ENCODE measurements at regions of chr6 and their contacts with region 1.

Region 1: DNA sequence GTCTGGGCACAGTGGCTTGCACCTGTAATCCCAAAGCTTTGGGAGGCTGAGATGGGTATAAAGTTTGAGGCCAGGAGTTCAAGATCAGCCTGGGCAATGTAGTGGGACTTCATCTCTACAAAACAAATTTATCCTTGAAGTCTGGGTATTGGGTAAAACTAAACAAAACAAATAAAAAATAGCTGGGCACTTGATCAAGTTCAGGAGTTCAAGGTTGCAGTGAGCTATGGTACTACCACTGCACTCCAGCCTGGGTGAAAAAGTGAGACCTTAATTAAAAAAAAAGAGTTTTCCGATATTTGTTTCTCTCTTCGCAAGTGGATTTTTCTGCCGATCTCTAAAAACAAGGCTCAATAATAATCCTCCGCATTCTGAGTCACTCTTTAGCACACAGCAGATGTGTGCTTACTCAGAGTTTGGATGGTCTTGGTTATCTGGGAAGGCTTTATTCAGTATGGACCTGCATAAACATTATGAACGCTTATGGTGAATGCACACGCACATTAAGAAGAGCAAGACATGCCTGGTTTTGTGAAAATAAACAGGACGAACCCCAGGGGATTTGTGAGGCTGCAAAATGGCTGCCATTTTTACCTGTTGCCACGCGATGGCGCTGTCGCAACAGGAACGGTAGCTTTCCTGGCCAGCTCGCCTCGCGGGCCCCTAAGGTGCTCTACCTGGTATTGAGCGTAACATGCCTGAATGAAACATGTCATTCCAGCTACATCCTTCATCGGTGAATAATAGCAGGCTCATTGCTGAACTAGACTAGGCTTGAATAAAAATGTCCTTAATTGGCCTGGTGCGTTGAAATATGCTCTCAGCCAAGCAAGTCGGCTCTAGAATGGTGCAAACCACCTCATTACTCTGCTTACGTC is 6.0 kb downstream of the OPN5 start:
- DNase-seq: peak; percentile 33
- H3K4me3 ChIP-seq: no peak overlapping the region
- H3K27ac ChIP-seq: no peak overlapping the region
- H3K4me1 ChIP-seq: no peaks in the 10 kb centered on the region
- H3K27me3 ChIP-seq: no peaks in the 10 kb centered on the region
- CTCF ChIP-seq: peak; percentile 62 to 85 (median 78)
- POLR2A ChIP-seq: no peak

Region 2: GRCh38 chr6:49030251-49031020 is 1242.6 kb after region 1 on chr6:
- intact Hi-C with region 1: no loop called
- DNase-seq: no peak
- H3K4me3 ChIP-seq: no peak overlapping the region
- H3K27ac ChIP-seq: no peak overlapping the region
- H3K4me1 ChIP-seq: no peaks in the 10 kb centered on the region
- H3K27me3 ChIP-seq: no peaks in the 10 kb centered on the region
- CTCF ChIP-seq: no peak
- POLR2A ChIP-seq: no peak

Region 3: DNA sequence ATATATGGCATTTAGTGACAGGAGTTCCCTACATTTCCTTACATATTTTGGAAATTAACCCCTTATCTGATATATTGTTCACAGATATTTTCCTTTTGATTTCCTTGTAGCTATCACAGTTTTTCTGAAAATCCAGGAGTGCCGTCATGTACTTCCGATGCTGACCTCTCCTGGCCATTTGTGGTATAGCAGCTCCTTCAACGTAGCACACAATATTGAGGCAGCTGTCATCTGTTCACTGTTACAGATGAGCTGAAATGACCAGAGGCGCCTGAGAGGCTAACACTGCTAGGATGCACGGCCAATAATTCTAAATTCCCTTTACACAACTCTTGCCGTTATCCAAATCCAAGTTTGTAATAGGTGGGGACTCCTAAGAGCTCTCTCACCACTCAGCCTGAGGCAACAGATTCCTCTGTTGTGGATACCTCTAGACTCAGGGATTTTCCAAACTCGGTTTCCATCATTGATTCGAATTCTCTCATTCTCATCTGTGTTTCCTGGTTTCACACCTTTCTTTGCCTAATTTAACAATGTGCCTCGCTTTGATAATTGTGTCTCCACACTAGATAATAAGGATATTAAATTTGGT is 1622.2 kb after region 1 on chr6:
- intact Hi-C with region 1: loop called (anchors 5 kb)
- DNase-seq: peak; percentile 39
- H3K4me3 ChIP-seq: no peak overlapping the region
- H3K27ac ChIP-seq: no peak overlapping the region
- H3K4me1 ChIP-seq: no peaks in the 10 kb centered on the region
- H3K27me3 ChIP-seq: no peaks in the 10 kb centered on the region
- CTCF ChIP-seq: peak; percentile 33 to 65 (median 57)
- POLR2A ChIP-seq: no peak